Activated T-helper 2 cell treated with anti-CD3 and anti-CD28 coated beads, Interferon-gamma antibody, Interleukin-2, Interleukin-4, amounts not matched to agents 10 μg/mL and 5 μg/mL and 100 μg/mL, durations not matched to agents 14 hours and 24 hours and 36 hours (primary cell): ENCODE measurements at regions of chr2 and their contacts with region 1.

Region 1: DNA sequence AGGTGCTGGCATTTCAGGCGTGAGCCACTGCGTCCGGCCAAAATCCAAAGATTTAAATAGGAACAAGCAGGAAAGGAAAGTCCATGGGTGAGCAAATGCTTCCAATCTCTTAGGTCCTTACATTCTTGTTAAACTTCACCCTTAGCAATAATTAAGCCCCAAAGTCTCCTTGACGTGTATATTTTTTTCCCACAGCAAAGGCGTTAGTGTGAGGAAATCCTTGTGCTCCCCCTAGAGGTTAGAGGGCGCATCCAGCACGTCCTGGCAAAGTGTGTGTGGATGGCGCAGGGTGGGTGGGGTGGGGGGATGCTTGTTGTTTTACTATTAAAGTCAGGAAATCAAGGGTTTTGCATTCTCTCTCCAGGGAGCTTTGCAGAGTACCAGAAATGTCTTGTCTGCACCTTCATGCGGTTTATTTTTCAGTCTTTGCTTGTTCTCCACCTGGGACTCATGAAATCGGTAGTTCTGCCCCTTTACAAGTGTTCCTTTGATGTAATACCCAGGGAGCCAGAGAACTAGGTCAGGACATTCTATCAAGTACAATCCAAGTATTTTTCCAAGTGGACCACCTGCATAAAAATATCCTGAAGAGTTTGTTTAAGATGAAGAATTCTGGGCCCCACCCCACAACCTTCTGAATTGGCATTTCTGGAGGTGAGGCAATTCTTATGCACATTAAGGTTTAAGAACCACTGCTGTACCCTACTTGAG is 22.2 kb upstream of the ITSN2 start:
- DNase-seq: peak; percentile 30
- H3K4me3 Mint-ChIP-seq: no peak overlapping the region
- H3K27ac Mint-ChIP-seq: no peak overlapping the region
- H3K4me1 Mint-ChIP-seq: no peaks in the 10 kb centered on the region
- H3K27me3 Mint-ChIP-seq: peaks cover 1% of the 10 kb centered on the region

Region 2: DNA sequence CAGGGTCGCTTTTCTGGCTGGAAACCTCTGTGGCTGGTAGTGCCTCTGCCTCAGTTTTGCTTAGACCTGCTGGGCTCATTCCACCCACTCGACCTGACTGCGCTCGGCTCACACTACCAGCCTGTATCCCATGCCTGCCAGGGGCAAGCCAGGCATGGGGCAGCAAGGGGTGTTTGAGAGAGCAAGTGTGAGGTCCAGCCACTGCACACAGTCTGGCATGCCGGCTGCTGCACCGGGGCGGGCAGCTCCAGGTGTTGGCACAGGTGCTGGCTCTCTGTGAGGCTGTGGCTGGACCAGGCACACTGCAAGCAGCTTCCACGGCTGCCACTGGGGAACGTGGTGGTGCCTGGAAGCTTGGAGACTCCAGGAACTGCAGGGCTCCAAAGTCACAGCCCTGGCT is 546.5 kb before region 1 on chr2:
- intact Hi-C with region 1: loop called (anchors 10 kb)
- DNase-seq: no peak
- H3K4me3 Mint-ChIP-seq: no peak overlapping the region
- H3K27ac Mint-ChIP-seq: no peak overlapping the region
- H3K4me1 Mint-ChIP-seq: no peaks in the 10 kb centered on the region
- H3K27me3 Mint-ChIP-seq: no peaks in the 10 kb centered on the region

Region 3: GRCh38 chr2:24084386-24085361 is 297.8 kb before region 1 on chr2 and contains the start of gene TP53I3:
- intact Hi-C with region 1: loop called (anchors 5 kb)
- DNase-seq: peak; percentile 79
- H3K4me3 Mint-ChIP-seq: peak within 1 kb of the TSS; percentile 84
- H3K27ac Mint-ChIP-seq: peak within 1 kb of the TSS; percentile 70
- H3K4me1 Mint-ChIP-seq: peaks cover 18% of the 10 kb centered on the region
- H3K27me3 Mint-ChIP-seq: no peaks in the 10 kb centered on the region
- total RNA-seq, gene TP53I3: 2.7 and 3.1 TPM in 2 replicates

Region 4: GRCh38 chr2:24228470-24228869 is 154.0 kb before region 1 on chr2:
- intact Hi-C with region 1: loop called (anchors 5 kb)
- DNase-seq: no peak
- H3K4me3 Mint-ChIP-seq: no peak overlapping the region
- H3K27ac Mint-ChIP-seq: no peak overlapping the region
- H3K4me1 Mint-ChIP-seq: no peaks in the 10 kb centered on the region
- H3K27me3 Mint-ChIP-seq: no peaks in the 10 kb centered on the region

Region 5: GRCh38 chr2:24421668-24422067 is 39.1 kb after region 1 on chr2:
- intact Hi-C with region 1: no loop called
- DNase-seq: peak; percentile 27
- H3K4me3 Mint-ChIP-seq: no peak overlapping the region
- H3K27ac Mint-ChIP-seq: no peak overlapping the region
- H3K4me1 Mint-ChIP-seq: no peaks in the 10 kb centered on the region
- H3K27me3 Mint-ChIP-seq: peaks cover 12% of the 10 kb centered on the region